HepG2 (cell line): ENCODE measurements at regions of chr4 and their contacts with region 1.

Region 1: DNA sequence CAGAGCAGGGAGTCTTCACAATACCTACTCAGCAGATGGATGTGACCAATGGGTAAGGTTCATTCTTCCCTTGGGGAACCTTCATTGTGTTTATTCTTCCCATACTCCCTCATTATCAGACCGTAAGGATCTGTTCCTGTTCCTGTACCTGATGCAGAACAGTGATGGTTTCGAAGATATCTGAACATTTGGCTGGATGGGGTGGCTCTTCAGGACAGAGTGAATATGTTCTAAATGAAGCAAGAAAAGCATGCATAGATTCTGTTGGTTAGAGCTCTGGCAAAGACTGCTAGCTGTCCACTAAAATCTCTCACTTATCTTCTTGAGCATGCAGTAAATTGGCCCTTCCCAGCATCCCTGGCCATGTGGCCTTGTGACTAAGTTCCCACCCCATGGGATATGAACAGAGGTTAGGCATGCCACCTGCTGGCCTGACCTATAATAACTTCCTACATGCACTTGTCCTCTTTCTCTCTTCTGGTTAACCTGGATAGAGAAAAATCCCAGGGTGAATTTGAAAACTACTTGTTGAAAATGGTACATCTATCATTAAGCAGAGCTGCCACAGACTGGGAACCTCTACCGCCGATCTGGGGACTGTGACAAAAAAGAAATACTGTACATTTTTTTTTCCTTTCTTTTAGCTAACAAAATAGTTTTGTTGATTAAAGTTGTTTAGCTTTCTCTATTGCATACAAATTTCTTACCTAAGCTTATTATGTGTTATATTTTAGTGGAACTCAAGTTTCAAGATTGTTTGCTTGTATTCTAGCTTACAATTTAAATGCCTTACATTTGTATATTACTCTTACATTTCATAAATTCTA is 60.0 kb upstream of the BANK1 start:
- DNase-seq: peak; percentile 54
- ATAC-seq: peak; percentile 99
- H3K4me3 ChIP-seq: no peak overlapping the region
- H3K27ac ChIP-seq: no peak overlapping the region
- H3K4me1 ChIP-seq: no peaks in the 10 kb centered on the region
- H3K27me3 ChIP-seq: no peaks in the 10 kb centered on the region
- CTCF ChIP-seq: peak; percentile 85
- EP300 ChIP-seq: no peak
- POLR2A ChIP-seq: no peak
- RAD21 ChIP-seq: peak; percentile 73

Region 2: DNA sequence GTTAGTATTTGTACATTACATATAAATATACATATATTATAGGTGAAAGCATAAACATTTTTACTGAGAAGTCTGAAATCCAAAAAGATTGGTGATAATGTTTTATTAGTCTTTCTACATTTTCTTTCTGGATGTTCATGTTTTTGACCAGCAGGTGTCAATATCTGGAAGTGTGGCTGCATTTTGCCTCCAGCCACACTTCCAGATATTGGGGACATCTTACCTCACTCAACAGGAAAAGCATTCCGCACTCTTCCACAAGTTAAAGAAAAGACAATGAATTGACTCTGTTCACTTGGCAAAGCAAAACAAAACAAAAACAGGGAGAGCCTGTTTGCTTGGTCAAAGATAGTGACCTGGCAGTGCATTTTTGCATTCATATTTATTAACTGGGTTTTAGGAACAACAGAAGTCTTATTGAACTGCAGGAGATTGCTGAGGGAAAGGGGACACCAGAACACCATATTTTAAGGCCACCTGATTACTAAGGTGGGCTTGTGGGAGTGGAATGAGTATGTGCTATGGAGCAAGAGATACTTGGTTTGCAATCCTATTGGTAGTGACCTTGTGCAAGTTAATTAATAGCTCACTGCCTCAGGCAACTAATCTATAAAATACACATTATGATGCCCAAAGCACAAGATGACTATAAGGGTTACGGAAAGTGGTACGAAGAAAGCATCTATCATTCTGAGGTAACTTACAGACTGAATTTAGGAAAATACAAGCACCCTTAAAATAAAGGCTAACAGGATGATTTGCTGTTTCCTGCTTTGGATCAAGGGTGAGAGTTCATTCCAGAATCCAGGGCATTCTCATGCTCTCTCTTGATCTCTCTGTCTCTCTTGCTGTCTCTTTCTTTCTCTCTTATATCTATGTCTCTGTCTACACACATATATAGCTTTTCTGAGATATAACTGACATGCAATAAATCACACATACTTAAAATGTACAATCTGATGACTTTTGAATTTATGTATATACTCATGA is 822.7 kb before region 1 on chr4:
- CTCF ChIA-PET with region 1: interaction called, 8 read pairs
- POLR2A ChIA-PET with region 1: no interaction called
- in situ Hi-C with region 1: no loop called
- intact Hi-C with region 1: loop called (anchors 1 kb)
- DNase-seq: peak; percentile 7
- ATAC-seq: peak; percentile 91
- H3K4me3 ChIP-seq: no peak overlapping the region
- H3K27ac ChIP-seq: no peak overlapping the region
- H3K4me1 ChIP-seq: peaks cover 9% of the 10 kb centered on the region
- H3K27me3 ChIP-seq: no peaks in the 10 kb centered on the region
- CTCF ChIP-seq: peak; percentile 30; the same call in 1 of the 2 replicates
- EP300 ChIP-seq: no peak
- POLR2A ChIP-seq: no peak
- RAD21 ChIP-seq: no peak

Region 3: DNA sequence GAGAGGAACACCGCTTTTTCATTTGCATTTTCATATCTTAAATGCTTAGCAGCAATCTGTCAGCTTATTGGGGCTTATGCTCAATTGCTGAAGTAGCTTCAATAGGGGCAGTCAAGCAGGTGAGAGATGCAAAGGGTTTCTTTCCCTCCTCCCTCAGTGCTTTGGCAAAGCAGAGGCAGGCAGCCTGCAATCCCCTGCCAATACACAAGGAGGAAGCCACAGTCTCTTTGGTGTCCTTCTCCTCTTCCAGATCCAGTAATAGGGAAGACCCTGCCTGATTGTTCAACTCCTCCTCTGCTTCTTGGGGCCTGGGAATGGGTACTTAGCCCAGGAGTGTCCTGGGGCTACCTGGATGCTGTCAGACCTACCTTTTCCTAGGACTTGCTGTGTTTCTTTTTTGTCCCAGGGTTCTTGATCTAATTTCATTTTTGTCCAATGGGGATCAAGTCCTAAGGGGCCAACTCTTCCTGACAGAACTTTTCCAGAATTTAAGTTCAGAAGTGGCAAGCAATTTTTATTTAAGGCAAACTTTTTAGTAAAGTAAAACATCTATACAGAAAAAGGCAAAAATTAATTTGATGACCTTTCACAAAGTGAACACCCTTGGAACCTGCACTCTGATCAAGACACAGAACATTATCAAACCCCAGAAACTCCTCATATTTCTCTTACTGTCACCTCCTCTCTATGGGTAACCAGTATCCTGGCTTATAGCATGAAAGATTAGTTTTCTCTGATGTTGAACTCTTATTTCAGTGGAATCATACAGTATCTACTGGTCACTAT is 643.5 kb before region 1 on chr4:
- CTCF ChIA-PET with region 1: no interaction called
- POLR2A ChIA-PET with region 1: no interaction called
- in situ Hi-C with region 1: no loop called
- intact Hi-C with region 1: loop called (anchors 5 kb)
- DNase-seq: peak; percentile 7
- ATAC-seq: peak; percentile 84
- H3K4me3 ChIP-seq: no peak overlapping the region
- H3K27ac ChIP-seq: no peak overlapping the region
- H3K4me1 ChIP-seq: no peaks in the 10 kb centered on the region
- H3K27me3 ChIP-seq: no peaks in the 10 kb centered on the region
- CTCF ChIP-seq: peak; percentile 28; the same call in 1 of the 2 replicates
- EP300 ChIP-seq: no peak
- POLR2A ChIP-seq: no peak
- RAD21 ChIP-seq: no peak; the same call in 1 of the 2 replicates

Region 4: GRCh38 chr4:101367201-101367600 is 363.3 kb before region 1 on chr4:
- CTCF ChIA-PET with region 1: no interaction called
- POLR2A ChIA-PET with region 1: no interaction called
- in situ Hi-C with region 1: no loop called
- intact Hi-C with region 1: loop called (anchors 5 kb)
- DNase-seq: no peak
- ATAC-seq: no peak
- H3K4me3 ChIP-seq: no peak overlapping the region
- H3K27ac ChIP-seq: no peak overlapping the region
- H3K4me1 ChIP-seq: peaks cover 8% of the 10 kb centered on the region; the same call in 1 of the 2 replicates
- H3K27me3 ChIP-seq: no peaks in the 10 kb centered on the region; a peak in 1 of 5 replicates
- CTCF ChIP-seq: no peak
- EP300 ChIP-seq: no peak
- POLR2A ChIP-seq: no peak
- RAD21 ChIP-seq: no peak

Region 5: DNA sequence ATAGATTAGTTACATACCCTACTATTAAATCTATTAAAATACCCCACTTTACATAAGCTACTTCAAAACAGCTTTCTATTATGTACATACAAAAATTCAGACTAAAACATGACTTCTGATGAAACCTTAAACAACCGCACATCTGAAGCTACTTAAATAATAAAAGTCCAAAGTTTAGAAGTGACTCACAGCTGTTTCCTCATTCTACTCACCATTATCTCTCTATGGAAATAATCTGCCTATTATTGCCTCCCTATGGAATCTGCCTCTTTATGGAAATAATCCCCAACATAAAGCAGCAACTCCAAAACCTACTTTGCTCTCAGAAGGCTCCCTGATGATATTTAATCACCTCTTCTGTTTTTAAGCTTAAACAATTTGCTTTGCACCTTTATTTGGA is 44.3 kb after region 1 on chr4:
- CTCF ChIA-PET with region 1: no interaction called
- POLR2A ChIA-PET with region 1: no interaction called
- in situ Hi-C with region 1: no loop called
- intact Hi-C with region 1: no loop called
- DNase-seq: peak; percentile 68
- ATAC-seq: peak; percentile 66
- H3K4me3 ChIP-seq: no peak overlapping the region
- H3K27ac ChIP-seq: no peak overlapping the region
- H3K4me1 ChIP-seq: peaks cover 8% of the 10 kb centered on the region; the same call in 1 of the 2 replicates
- H3K27me3 ChIP-seq: no peaks in the 10 kb centered on the region
- CTCF ChIP-seq: no peak
- EP300 ChIP-seq: peak in 1 of 2 experiments; percentile 29; a peak in 1 of 4 replicates
- POLR2A ChIP-seq: no peak
- RAD21 ChIP-seq: no peak

Region 6: GRCh38 chr4:101813604-101814003 is 83.1 kb after region 1 on chr4:
- CTCF ChIA-PET with region 1: no interaction called
- POLR2A ChIA-PET with region 1: no interaction called
- in situ Hi-C with region 1: no loop called
- intact Hi-C with region 1: no loop called
- DNase-seq: no peak
- ATAC-seq: no peak
- H3K4me3 ChIP-seq: no peak overlapping the region
- H3K27ac ChIP-seq: no peak overlapping the region
- H3K4me1 ChIP-seq: no peaks in the 10 kb centered on the region
- H3K27me3 ChIP-seq: no peaks in the 10 kb centered on the region
- CTCF ChIP-seq: no peak
- EP300 ChIP-seq: no peak
- POLR2A ChIP-seq: no peak
- RAD21 ChIP-seq: no peak